ENCODE measurements at regions of chr1 and their contacts with region 1.

Region 1: DNA sequence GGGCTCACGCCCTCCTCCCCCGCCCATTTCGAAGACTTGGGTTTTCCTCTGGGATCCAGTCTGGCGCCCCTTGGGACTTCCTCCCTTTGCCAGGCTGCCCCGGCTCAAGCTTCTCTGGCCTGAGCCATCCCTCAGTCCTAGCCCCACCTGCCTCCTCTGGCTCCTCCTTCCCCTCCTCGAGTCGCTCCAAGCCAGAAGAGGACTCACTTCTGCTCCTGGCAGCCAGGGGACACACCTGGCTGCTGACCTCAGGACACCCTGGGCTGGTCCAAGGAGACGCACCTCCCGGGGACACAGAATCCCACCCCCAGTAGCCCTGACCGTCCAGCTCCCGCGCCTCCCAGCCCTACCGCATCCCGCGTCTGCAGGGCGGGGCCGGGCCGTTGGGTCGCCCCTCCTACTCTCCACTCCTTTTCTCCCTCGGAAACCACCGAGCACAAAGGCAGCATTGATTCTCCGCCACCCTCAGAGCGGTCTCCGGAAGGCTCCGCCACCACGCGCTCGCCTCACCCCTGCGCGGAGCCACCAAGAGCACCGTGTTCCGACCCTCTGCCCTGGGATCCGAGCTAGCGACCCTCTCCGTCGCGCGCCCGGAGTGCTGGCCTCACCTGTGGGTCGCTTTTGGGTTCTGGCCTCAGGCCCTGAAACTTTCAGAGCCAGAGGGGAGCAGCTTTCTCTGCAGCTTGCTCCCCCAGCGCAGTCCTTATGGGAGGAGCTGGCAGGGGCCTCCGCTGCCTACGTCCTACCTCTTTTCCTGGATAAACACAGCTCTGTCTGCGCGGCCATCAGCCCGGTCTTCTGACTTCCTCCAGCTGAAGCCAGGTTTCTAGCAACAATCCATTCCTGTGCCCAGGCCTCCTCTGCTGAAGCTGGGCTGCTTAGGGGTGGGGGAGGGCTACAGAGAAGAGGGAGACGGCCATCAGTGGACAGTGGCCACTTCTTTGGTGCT is at the start of gene C2CD4D:
- DNase-seq: peak; percentile 82
- ATAC-seq: peak; percentile 77
- H3K4me3 Mint-ChIP-seq: peak within 1 kb of the TSS; percentile 88
- H3K27ac Mint-ChIP-seq: peak within 1 kb of the TSS; percentile 96
- H3K4me1 Mint-ChIP-seq: peaks cover 26% of the 10 kb centered on the region
- H3K27me3 Mint-ChIP-seq: peaks cover 36% of the 10 kb centered on the region
- CTCF ChIP-seq: no peak
- total RNA-seq, gene C2CD4D: 0.85 to 2.0 TPM (median 0.94 TPM) in 3 replicates

Region 2: DNA sequence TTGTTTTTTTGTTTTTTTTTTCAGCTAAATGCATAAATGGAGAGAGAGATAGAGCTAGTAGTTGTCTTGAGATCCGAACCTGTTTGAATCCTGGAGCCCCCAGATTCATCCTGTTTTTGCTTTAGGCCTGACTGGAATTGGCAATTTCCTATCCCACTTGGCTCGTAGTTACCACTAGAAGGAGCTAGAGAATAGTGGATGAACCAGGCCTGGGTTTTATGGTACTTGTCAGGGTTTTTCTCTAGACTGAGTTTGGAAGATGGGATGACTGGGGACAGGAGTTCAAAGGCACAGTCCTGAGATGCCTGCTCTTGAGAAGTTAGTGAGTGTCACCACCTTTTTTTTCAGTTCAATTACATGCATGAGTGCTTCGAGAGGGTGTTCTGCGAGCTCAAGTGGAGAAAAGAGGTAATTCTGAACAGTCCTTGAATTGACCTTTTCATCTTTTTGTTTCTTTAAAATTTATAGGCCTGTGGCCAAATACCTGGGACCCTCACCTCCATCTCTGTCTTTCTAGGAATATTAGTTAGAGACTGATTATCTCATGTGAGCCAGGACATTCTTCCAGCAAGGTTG is 146.6 kb before region 1 on chr1:
- CTCF ChIA-PET with region 1: interaction called, 11 read pairs
- POLR2A ChIA-PET with region 1: no interaction called
- DNase-seq: no peak
- ATAC-seq: peak; percentile 73; the same call in 1 of the 2 replicates
- H3K4me3 Mint-ChIP-seq: no peak overlapping the region
- H3K27ac Mint-ChIP-seq: no peak overlapping the region
- H3K4me1 Mint-ChIP-seq: no peaks in the 10 kb centered on the region
- H3K27me3 Mint-ChIP-seq: no peaks in the 10 kb centered on the region
- CTCF ChIP-seq: no peak

Region 3: GRCh38 chr1:151728151-151729054 is 111.3 kb before region 1 on chr1:
- CTCF ChIA-PET with region 1: interaction called, 21 read pairs
- POLR2A ChIA-PET with region 1: no interaction called
- DNase-seq: no peak
- ATAC-seq: peak; percentile 75
- H3K4me3 Mint-ChIP-seq: peak overlapping the region; percentile 37
- H3K27ac Mint-ChIP-seq: no peak overlapping the region
- H3K4me1 Mint-ChIP-seq: peaks cover 32% of the 10 kb centered on the region
- H3K27me3 Mint-ChIP-seq: peaks cover 22% of the 10 kb centered on the region
- CTCF ChIP-seq: no peak

Region 4: GRCh38 chr1:151762941-151763921 is 76.5 kb before region 1 on chr1 and contains the start of gene MRPL9:
- CTCF ChIA-PET with region 1: interaction called, 15 read pairs
- POLR2A ChIA-PET with region 1: no interaction called
- DNase-seq: peak; percentile 87
- ATAC-seq: peak; percentile 99
- H3K4me3 Mint-ChIP-seq: peak within 1 kb of the TSS; percentile 90
- H3K27ac Mint-ChIP-seq: peak within 1 kb of the TSS; percentile 96
- H3K4me1 Mint-ChIP-seq: peaks cover 14% of the 10 kb centered on the region
- H3K27me3 Mint-ChIP-seq: no peaks in the 10 kb centered on the region
- CTCF ChIP-seq: no peak
- total RNA-seq, gene MRPL9: 88.8 to 99.3 TPM (median 95.5 TPM) in 3 replicates

Region 5: GRCh38 chr1:151828965-151829698 is 10.6 kb before region 1 on chr1:
- CTCF ChIA-PET with region 1: interaction called, 17 read pairs
- POLR2A ChIA-PET with region 1: no interaction called
- DNase-seq: peak; percentile 60
- ATAC-seq: peak; percentile 65
- H3K4me3 Mint-ChIP-seq: peak overlapping the region; percentile 47
- H3K27ac Mint-ChIP-seq: peak overlapping the region; percentile 64
- H3K4me1 Mint-ChIP-seq: peaks cover 47% of the 10 kb centered on the region
- H3K27me3 Mint-ChIP-seq: peaks cover 6% of the 10 kb centered on the region; the same call in 1 of the 2 replicates
- CTCF ChIP-seq: no peak